ENCODE measurements at regions of chr7 and their contacts with region 1.

Region 1: GRCh38 chr7:56009695-56010094 is 41.5 kb downstream of the PSPH start:
- DNase-seq: no peak
- H3K4me3 ChIP-seq: no peak overlapping the region
- H3K4me3 Mint-ChIP-seq: no peak overlapping the region
- H3K27ac Mint-ChIP-seq: no peak overlapping the region
- H3K4me1 ChIP-seq: peaks cover 23% of the 10 kb centered on the region
- H3K4me1 Mint-ChIP-seq: peaks cover 14% of the 10 kb centered on the region
- H3K27me3 ChIP-seq: no peaks in the 10 kb centered on the region
- H3K27me3 Mint-ChIP-seq: no peaks in the 10 kb centered on the region
- CTCF ChIP-seq: no peak

Region 2: GRCh38 chr7:56026538-56026937 is 16.8 kb after region 1 on chr7:
- CTCF ChIA-PET with region 1: no interaction called
- POLR2A ChIA-PET with region 1: interaction called, 4 read pairs
- intact Hi-C with region 1: loop called (anchors 2 kb)
- DNase-seq: no peak
- H3K4me3 ChIP-seq: no peak overlapping the region
- H3K4me3 Mint-ChIP-seq: peak overlapping the region; percentile 6
- H3K27ac Mint-ChIP-seq: peak overlapping the region; percentile 58
- H3K4me1 ChIP-seq: peaks cover 29% of the 10 kb centered on the region
- H3K4me1 Mint-ChIP-seq: peaks cover 23% of the 10 kb centered on the region
- H3K27me3 ChIP-seq: no peaks in the 10 kb centered on the region
- H3K27me3 Mint-ChIP-seq: no peaks in the 10 kb centered on the region
- CTCF ChIP-seq: no peak

Region 3: GRCh38 chr7:56033671-56034432 is 24.2 kb after region 1 on chr7:
- CTCF ChIA-PET with region 1: interaction called, 3 read pairs
- POLR2A ChIA-PET with region 1: interaction called, 4 read pairs
- intact Hi-C with region 1: loop called (anchors 2 kb)
- DNase-seq: peak; percentile 96
- H3K4me3 ChIP-seq: peak overlapping the region; percentile 80
- H3K4me3 Mint-ChIP-seq: peak overlapping the region; percentile 85
- H3K27ac Mint-ChIP-seq: peak overlapping the region; percentile 89
- H3K4me1 ChIP-seq: peaks cover 29% of the 10 kb centered on the region
- H3K4me1 Mint-ChIP-seq: peaks cover 21% of the 10 kb centered on the region
- H3K27me3 ChIP-seq: no peaks in the 10 kb centered on the region
- H3K27me3 Mint-ChIP-seq: no peaks in the 10 kb centered on the region
- CTCF ChIP-seq: peak; percentile 31 to 55

Region 4: DNA sequence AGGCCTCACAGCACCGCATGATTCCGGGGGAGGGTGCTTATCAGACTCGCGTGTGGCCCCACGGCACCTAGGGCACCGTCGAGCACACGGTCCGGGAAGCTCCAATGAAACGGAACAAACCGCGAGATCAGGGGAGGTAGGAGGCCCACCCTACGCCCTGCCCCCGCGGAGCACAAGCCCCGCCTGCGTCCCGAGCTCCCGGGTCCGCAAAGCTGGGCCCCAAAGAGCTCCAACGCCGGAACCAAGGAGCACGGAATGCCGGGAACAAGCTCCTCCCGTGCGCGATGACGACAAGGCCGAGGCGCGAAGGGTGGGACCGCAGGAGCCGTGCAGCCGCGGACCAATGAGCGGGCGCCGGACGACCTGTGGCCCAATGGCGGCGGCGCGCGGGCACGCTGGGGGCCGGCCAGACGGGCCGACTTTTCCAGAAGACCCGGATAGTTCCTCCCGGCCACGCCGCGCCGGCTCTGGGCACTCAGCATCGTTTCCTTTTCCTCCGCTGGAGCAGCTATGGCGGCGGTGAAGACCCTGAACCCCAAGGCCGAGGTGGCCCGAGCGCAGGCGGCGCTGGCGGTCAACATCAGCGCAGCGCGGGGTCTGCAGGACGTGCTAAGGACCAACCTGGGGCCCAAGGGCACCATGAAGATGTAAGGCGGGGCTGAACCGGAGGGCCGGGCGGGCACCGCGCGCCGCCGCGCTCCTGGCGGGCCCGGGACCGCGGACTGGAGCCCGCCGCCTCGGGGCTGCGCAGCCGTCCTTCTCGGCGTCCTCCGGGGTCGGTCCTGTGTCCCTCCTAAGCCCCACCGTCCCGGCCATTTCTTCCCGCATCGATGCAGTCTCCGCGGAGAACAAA is 41.9 kb after region 1 on chr7 and contains the starts of genes CCT6A and PSPH:
- CTCF ChIA-PET with region 1: interaction called, 3 read pairs
- POLR2A ChIA-PET with region 1: interaction called, 14 read pairs
- intact Hi-C with region 1: loop called (anchors 1 kb)
- DNase-seq: peak; percentile 99
- H3K4me3 ChIP-seq: peak within 1 kb of the TSS; percentile 59
- H3K4me3 Mint-ChIP-seq: peak within 1 kb of the TSS; percentile 92
- H3K27ac Mint-ChIP-seq: peak within 1 kb of the TSS; percentile 91
- H3K4me1 ChIP-seq: peaks cover 45% of the 10 kb centered on the region
- H3K4me1 Mint-ChIP-seq: peaks cover 4% of the 10 kb centered on the region
- H3K27me3 ChIP-seq: no peaks in the 10 kb centered on the region
- H3K27me3 Mint-ChIP-seq: no peaks in the 10 kb centered on the region
- CTCF ChIP-seq: no peak
- total RNA-seq, gene CCT6A: 242 and 248 TPM in 2 replicates
- total RNA-seq, gene PSPH: 107 and 111 TPM in 2 replicates

Region 5: GRCh38 chr7:56063882-56064625 is 54.4 kb after region 1 on chr7 and contains the start of gene SUMF2:
- CTCF ChIA-PET with region 1: interaction called, 3 read pairs
- POLR2A ChIA-PET with region 1: interaction called, 22 read pairs
- intact Hi-C with region 1: loop called (anchors 1 kb)
- DNase-seq: peak; percentile 93 to 96
- H3K4me3 ChIP-seq: peak within 1 kb of the TSS; percentile 88
- H3K4me3 Mint-ChIP-seq: peak within 1 kb of the TSS; percentile 75
- H3K27ac Mint-ChIP-seq: peak within 1 kb of the TSS; percentile 88
- H3K4me1 ChIP-seq: peaks cover 34% of the 10 kb centered on the region
- H3K4me1 Mint-ChIP-seq: peaks cover 23% of the 10 kb centered on the region
- H3K27me3 ChIP-seq: no peaks in the 10 kb centered on the region
- H3K27me3 Mint-ChIP-seq: no peaks in the 10 kb centered on the region
- CTCF ChIP-seq: peak in 1 of 2 experiments; percentile 51
- total RNA-seq, gene SUMF2: 150 and 172 TPM in 2 replicates

Region 6: DNA sequence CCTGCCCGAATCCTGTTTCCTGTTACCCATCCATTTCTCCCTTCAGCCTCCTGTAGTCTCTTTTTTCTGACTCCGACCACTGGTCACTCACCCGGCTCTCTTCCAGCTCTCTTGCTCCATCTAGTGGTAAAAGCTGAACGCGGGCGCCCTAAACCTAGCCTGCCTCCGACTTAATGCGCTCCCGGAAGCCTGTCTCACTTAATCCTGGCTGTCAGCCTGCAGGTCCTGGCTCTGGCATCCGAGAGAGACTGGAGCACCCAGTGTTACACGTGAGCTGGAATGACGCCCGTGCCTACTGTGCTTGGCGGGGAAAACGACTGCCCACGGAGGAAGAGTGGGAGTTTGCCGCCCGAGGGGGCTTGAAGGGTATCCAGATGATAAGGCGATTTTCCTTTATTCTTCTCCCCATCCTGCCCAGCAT is 64.7 kb after region 1 on chr7:
- CTCF ChIA-PET with region 1: interaction called, 4 read pairs
- POLR2A ChIA-PET with region 1: no interaction called
- intact Hi-C with region 1: loop called (anchors 1 kb)
- DNase-seq: peak; percentile 77 to 89
- H3K4me3 ChIP-seq: no peak overlapping the region
- H3K4me3 Mint-ChIP-seq: no peak overlapping the region
- H3K27ac Mint-ChIP-seq: peak overlapping the region; percentile 30
- H3K4me1 ChIP-seq: no peaks in the 10 kb centered on the region
- H3K4me1 Mint-ChIP-seq: peaks cover 13% of the 10 kb centered on the region
- H3K27me3 ChIP-seq: no peaks in the 10 kb centered on the region
- H3K27me3 Mint-ChIP-seq: no peaks in the 10 kb centered on the region
- CTCF ChIP-seq: peak; percentile 81 to 89

Region 7: DNA sequence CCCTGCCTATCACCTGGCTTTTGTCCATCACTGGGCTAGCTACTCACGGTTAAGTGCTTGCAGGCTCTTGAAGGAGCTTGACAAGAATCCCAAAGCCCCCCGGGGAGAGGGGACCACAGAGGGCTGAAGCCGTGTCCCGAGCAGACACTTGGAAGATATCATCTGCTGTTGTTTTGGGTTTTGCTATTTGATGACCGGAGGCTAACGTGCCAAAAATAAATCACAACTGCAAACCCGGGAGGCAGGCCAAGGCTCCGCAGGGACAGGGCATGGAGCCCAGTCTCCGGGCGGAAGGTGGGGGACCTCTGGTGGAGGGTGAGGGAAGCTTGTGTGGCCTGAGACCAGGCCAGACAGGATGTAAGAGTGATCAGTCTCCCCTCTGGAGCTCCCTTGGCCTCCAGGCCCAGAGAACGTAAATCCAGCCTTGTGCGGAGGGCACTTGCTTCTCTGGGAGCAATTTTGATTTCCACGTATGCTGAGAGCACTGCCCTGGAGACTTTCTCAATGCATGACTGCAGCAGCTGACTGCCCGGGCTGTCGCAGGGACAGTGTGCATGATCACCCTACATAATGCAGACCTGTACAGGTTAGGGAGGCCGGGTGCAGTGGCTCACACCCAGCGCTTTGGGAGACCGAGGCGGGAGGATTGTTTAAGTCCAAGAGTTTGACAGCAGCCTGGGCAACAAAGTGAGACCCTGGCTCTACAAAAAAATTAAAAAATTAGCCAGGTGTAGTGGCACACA is 83.3 kb after region 1 on chr7 and contains the start of gene PHKG1:
- CTCF ChIA-PET with region 1: interaction called, 14 read pairs
- POLR2A ChIA-PET with region 1: no interaction called
- intact Hi-C with region 1: no loop called
- DNase-seq: peak in 1 of 2 experiments; percentile 26
- H3K4me3 ChIP-seq: no peak within 1 kb of the TSS
- H3K4me3 Mint-ChIP-seq: no peak within 1 kb of the TSS
- H3K27ac Mint-ChIP-seq: no peak within 1 kb of the TSS
- H3K4me1 ChIP-seq: no peaks in the 10 kb centered on the region
- H3K4me1 Mint-ChIP-seq: no peaks in the 10 kb centered on the region
- H3K27me3 ChIP-seq: no peaks in the 10 kb centered on the region
- H3K27me3 Mint-ChIP-seq: no peaks in the 10 kb centered on the region
- CTCF ChIP-seq: peak; percentile 29 to 40
- total RNA-seq, gene PHKG1: 1.1 and 1.6 TPM in 2 replicates

Measured in Caco-2 (cell line).